H1 (cell line): ENCODE measurements at regions of chr20 and their contacts with region 1.

Region 1: DNA sequence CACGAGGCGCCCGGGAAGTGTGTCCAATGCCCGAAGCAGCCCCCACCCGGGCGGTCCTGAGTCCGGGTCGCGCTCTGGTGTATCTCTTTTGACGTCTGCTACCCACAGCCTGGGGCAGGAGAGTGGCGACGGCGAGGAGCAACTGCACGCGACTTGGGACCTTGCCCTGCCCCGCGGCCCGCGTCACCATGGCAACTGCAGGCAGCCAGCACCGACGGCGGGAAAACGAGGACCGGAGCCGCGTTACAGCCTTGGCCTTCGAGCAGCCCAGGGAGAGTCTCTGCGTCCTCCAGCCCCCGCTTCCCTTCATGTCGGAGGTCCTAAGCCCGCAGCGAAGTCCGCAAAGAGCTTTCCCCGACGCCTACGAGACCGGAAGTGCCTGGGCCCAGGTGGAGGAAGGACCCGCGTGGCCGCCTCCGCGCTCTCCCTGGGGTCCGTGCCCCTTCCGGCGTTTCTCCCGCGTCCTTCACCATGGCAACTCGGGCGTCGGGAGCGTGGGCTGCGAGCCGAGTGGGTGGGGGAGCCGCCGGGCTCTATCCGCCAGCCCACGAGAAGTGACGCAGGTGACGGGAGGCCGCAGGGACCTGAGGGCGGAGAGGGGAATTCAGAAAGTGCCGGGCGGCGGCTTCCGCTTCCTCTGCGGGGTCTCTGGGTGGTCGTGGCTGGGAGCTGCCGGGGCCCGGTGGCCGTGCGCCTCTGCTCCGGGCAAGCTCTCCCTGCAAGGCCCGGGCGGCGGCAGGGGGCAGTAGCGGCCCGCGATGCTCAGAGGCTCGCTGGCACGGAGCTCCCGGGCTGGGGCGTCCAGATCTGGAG is 88.6 kb upstream of the TGM3 start:
- DNase-seq: peak; percentile 39 to 91
- H3K4me3 ChIP-seq: peak overlapping the region; percentile 35 to 71 (median 68)
- H3K27ac ChIP-seq: no peak overlapping the region
- H3K4me1 ChIP-seq: no peaks in the 10 kb centered on the region; a peak in 2 of 7 replicates
- H3K27me3 ChIP-seq: peaks cover 0 to 5% (median 3%) of the 10 kb centered on the region in 4 experiments; a peak in 4 of 7 replicates
- CTCF ChIP-seq: peak; percentile 71 to 90 (median 82)
- EP300 ChIP-seq: no peak
- POLR2A ChIP-seq: no peak
- RAD21 ChIP-seq: peak; percentile 90 to 93

Region 2: GRCh38 chr20:2022163-2022562 is 185.0 kb before region 1 on chr20:
- CTCF ChIA-PET with region 1: no interaction called
- POLR2A ChIA-PET with region 1: no interaction called
- DNase-seq: no peak
- H3K4me3 ChIP-seq: no peak overlapping the region
- H3K27ac ChIP-seq: no peak overlapping the region
- H3K4me1 ChIP-seq: no peaks in the 10 kb centered on the region
- H3K27me3 ChIP-seq: no peaks in the 10 kb centered on the region
- CTCF ChIP-seq: no peak
- EP300 ChIP-seq: no peak
- POLR2A ChIP-seq: no peak
- RAD21 ChIP-seq: no peak

Region 3: DNA sequence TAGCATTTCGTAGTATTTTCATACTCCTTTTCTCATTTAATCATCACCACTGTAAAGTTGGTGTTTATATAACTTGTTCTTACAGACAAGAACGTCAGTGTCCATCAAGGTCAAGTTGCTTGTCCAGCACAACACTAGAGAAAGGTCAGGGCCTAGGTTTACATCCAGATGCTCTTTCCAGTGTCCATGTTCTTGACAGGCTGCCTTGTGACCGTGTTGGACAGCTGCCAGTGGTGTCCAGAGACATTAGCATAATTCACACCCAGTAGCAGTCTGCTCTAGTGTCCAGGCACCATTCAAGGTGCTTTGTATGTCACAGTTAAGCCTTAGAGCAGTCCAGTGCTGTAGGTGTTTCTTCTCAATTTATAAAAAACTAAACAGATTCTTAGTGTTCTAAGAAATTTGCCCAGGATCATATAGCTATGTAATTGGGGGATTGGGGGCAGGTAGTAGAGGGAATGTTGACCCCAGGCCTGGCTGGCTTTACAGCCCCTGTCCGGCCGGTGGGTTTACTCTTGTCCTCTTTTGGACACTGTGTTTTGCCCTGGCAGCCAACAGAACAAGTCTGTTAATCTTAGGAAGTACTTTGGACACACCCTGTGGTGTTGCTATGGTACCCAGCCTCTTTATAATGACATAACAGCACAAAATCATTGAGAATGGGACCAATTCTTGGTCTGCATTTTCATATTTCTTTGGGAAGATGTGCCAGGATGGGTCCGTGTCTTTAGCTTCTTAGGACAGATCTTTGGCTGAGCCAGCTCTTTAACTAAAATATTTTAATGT is 97.5 kb before region 1 on chr20:
- CTCF ChIA-PET with region 1: no interaction called
- POLR2A ChIA-PET with region 1: no interaction called
- DNase-seq: no peak
- H3K4me3 ChIP-seq: no peak overlapping the region
- H3K27ac ChIP-seq: no peak overlapping the region
- H3K4me1 ChIP-seq: no peaks in the 10 kb centered on the region; a peak in 1 of 7 replicates
- H3K27me3 ChIP-seq: no peaks in the 10 kb centered on the region
- CTCF ChIP-seq: no peak
- EP300 ChIP-seq: no peak
- POLR2A ChIP-seq: no peak
- RAD21 ChIP-seq: no peak

Region 4: DNA sequence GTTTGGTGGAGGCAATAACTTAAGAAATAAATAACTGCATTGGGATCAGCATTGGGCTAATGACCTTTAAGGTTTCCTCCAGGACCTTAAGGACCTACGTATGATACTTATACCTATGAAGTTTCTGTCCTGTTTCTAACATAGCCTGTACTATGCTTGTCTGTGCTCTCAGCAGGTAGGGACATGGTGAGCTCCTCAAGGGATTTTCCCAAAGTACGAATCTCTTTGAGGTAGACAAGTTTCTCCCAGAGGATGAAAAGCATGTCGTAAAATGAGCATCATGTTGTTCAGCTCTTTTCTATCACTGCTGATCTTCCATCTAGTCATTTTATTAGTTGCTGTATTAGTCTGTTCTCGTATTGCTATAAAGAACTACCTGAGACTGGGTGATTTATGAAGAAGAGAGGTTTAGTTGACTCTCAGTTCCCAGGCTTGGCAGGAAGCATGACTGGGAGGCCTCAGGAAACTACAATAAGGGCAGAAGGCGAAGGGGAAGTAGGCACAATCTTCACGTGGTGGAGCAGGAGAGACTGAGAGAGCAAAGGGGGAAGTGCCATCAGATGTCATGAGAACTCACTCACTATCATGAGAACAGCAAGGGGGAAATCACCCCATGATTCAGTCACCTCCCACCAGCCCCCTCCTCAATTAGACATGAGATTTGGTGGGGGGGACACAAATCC is 10.8 kb after region 1 on chr20:
- CTCF ChIA-PET with region 1: interaction called, 12 read pairs
- POLR2A ChIA-PET with region 1: no interaction called
- DNase-seq: no peak
- H3K4me3 ChIP-seq: no peak overlapping the region
- H3K27ac ChIP-seq: no peak overlapping the region
- H3K4me1 ChIP-seq: no peaks in the 10 kb centered on the region
- H3K27me3 ChIP-seq: no peaks in the 10 kb centered on the region
- CTCF ChIP-seq: no peak
- EP300 ChIP-seq: no peak
- POLR2A ChIP-seq: no peak
- RAD21 ChIP-seq: no peak

Region 5: DNA sequence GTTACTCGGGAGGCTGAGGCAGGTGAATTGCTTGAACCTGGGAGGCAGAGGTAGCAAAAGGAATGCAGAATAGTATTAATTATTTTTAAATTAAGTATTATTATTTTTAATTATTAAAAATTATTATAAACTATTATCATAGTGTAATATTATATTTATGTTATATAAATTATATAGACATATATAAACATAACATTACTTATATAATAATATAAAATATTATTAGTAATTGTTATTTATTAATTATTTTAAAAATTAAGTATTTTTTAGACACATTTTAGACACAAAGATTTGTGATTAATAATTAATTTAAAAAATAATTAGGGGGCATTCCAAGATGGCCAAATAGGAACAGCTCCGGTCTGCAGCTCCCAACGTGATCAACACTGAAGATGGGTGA is 57.0 kb after region 1 on chr20:
- CTCF ChIA-PET with region 1: interaction called, 16 read pairs
- POLR2A ChIA-PET with region 1: interaction called, 3 read pairs
- DNase-seq: no peak
- H3K4me3 ChIP-seq: peak overlapping the region in 1 of 4 experiments; percentile 52; a peak in 2 of 8 replicates
- H3K27ac ChIP-seq: peak overlapping the region; percentile 81
- H3K4me1 ChIP-seq: peaks cover 0 to 4% (median 1%) of the 10 kb centered on the region in 4 experiments; a peak in 3 of 7 replicates
- H3K27me3 ChIP-seq: no peaks in the 10 kb centered on the region
- CTCF ChIP-seq: no peak
- EP300 ChIP-seq: no peak
- POLR2A ChIP-seq: no peak
- RAD21 ChIP-seq: no peak

Region 6: GRCh38 chr20:2349818-2350508 is 142.8 kb after region 1 on chr20:
- CTCF ChIA-PET with region 1: interaction called, 14 read pairs
- POLR2A ChIA-PET with region 1: interaction called, 4 read pairs
- DNase-seq: no peak
- H3K4me3 ChIP-seq: no peak overlapping the region
- H3K27ac ChIP-seq: no peak overlapping the region
- H3K4me1 ChIP-seq: no peaks in the 10 kb centered on the region
- H3K27me3 ChIP-seq: no peaks in the 10 kb centered on the region
- CTCF ChIP-seq: no peak
- EP300 ChIP-seq: no peak
- POLR2A ChIP-seq: no peak
- RAD21 ChIP-seq: no peak

Region 7: GRCh38 chr20:2446845-2447244 is 239.7 kb after region 1 on chr20:
- CTCF ChIA-PET with region 1: interaction called, 26 read pairs
- POLR2A ChIA-PET with region 1: no interaction called
- DNase-seq: no peak
- H3K4me3 ChIP-seq: no peak overlapping the region
- H3K27ac ChIP-seq: no peak overlapping the region
- H3K4me1 ChIP-seq: peaks cover 0 to 4% (median 0%) of the 10 kb centered on the region in 4 experiments; a peak in 1 of 7 replicates
- H3K27me3 ChIP-seq: no peaks in the 10 kb centered on the region
- CTCF ChIP-seq: no peak
- EP300 ChIP-seq: no peak
- POLR2A ChIP-seq: no peak
- RAD21 ChIP-seq: no peak